CD14-positive monocyte (primary cell): ENCODE measurements at regions of chr12 and their contacts with region 1.

Region 1: GRCh38 chr12:113271853-113272561 is 50.7 kb downstream of the TPCN1 start:
- DNase-seq: peak; percentile 78 to 90 (median 81)
- H3K4me3 ChIP-seq: peak overlapping the region in 1 of 3 experiments; percentile 55
- H3K4me3 Mint-ChIP-seq: peak overlapping the region; percentile 45 to 81
- H3K27ac ChIP-seq: peak overlapping the region; percentile 81 to 84
- H3K27ac Mint-ChIP-seq: peak overlapping the region; percentile 87 to 94 (median 89)
- H3K4me1 ChIP-seq: peaks cover 17% of the 10 kb centered on the region in 2 donors
- H3K4me1 Mint-ChIP-seq: peaks cover 20% of the 10 kb centered on the region
- H3K27me3 ChIP-seq: no peaks in the 10 kb centered on the region
- H3K27me3 Mint-ChIP-seq: peaks cover 0 to 5% (median 0%) of the 10 kb centered on the region in 3 donors
- CTCF ChIP-seq: no peak

Region 2: GRCh38 chr12:113196996-113197395 is 75.0 kb before region 1 on chr12:
- intact Hi-C with region 1: loop called (anchors 5 to 10 kb)
- DNase-seq: peak; percentile 76 to 85 (median 80)
- H3K4me3 ChIP-seq: no peak overlapping the region
- H3K4me3 Mint-ChIP-seq: no peak overlapping the region
- H3K27ac ChIP-seq: no peak overlapping the region
- H3K27ac Mint-ChIP-seq: peak overlapping the region in 2 of 7 donors; percentile 37 to 43
- H3K4me1 ChIP-seq: peaks cover 36 to 37% of the 10 kb centered on the region in 2 donors
- H3K4me1 Mint-ChIP-seq: peaks cover 43% of the 10 kb centered on the region
- H3K27me3 ChIP-seq: no peaks in the 10 kb centered on the region
- H3K27me3 Mint-ChIP-seq: peaks cover 0 to 1% (median 1%) of the 10 kb centered on the region in 3 donors
- CTCF ChIP-seq: peak; percentile 79

Region 3: GRCh38 chr12:113456761-113457160 is 184.8 kb after region 1 on chr12:
- intact Hi-C with region 1: no loop called
- DNase-seq: no peak
- H3K4me3 ChIP-seq: no peak overlapping the region
- H3K4me3 Mint-ChIP-seq: no peak overlapping the region
- H3K27ac ChIP-seq: no peak overlapping the region
- H3K27ac Mint-ChIP-seq: no peak overlapping the region
- H3K4me1 ChIP-seq: no peaks in the 10 kb centered on the region
- H3K4me1 Mint-ChIP-seq: peaks cover 2% of the 10 kb centered on the region
- H3K27me3 ChIP-seq: peaks cover 4 to 28% of the 10 kb centered on the region in 2 donors
- H3K27me3 Mint-ChIP-seq: peaks cover 40 to 72% (median 46%) of the 10 kb centered on the region in 3 donors
- CTCF ChIP-seq: no peak